SK-N-SH (cell line): ENCODE measurements at regions of chr2 and their contacts with region 1.

Region 1: GRCh38 chr2:46364797-46365457 is 67.7 kb downstream of the EPAS1 start:
- DNase-seq: peak; percentile 80
- H3K4me3 ChIP-seq: no peak overlapping the region; a peak in 1 of 4 replicates
- H3K27ac ChIP-seq: peak overlapping the region; percentile 75 to 98; a peak in 3 of 4 replicates
- H3K4me1 ChIP-seq: peaks cover 14 to 76% of the 10 kb centered on the region in 2 experiments; a peak in 3 of 4 replicates
- H3K27me3 ChIP-seq: no peaks in the 10 kb centered on the region
- CTCF ChIP-seq: peak; percentile 98
- EP300 ChIP-seq: peak in 1 of 2 experiments; percentile 74; a peak in 2 of 4 replicates
- RAD21 ChIP-seq: peak; percentile 94

Region 2: DNA sequence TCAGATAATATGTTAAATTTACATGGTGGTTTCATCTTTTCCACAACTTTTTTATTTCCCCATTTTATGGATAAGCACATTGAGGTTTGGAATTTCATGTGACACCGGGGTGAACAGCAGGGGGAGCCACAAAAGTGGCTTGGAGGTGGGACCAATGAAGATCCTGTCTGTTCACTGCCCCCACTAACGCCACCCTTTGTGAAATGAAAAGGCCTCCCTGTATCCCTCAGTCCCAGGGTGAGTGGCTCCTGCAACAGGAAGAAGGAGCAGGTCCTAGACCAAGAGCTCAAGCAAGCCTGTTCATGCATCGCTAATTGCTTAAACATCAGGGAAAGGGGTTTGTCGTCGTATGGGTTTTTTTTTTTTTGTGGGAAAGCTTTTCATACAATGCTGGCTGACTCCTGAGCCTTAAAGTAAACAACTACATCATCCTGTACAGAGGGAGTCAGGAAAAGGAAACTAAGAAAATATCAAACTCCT is 335.6 kb before region 1 on chr2:
- CTCF ChIA-PET with region 1: interaction called, 13 read pairs
- POLR2A ChIA-PET with region 1: no interaction called
- DNase-seq: no peak
- H3K4me3 ChIP-seq: no peak overlapping the region
- H3K27ac ChIP-seq: no peak overlapping the region
- H3K4me1 ChIP-seq: peaks cover 5 to 9% of the 10 kb centered on the region in 2 experiments; a peak in 1 of 4 replicates
- H3K27me3 ChIP-seq: no peaks in the 10 kb centered on the region
- CTCF ChIP-seq: peak; percentile 41
- EP300 ChIP-seq: no peak
- RAD21 ChIP-seq: no peak

Region 3: GRCh38 chr2:46236005-46236875 is 128.7 kb before region 1 on chr2:
- CTCF ChIA-PET with region 1: interaction called, 10 read pairs
- POLR2A ChIA-PET with region 1: no interaction called
- DNase-seq: peak; percentile 71
- H3K4me3 ChIP-seq: no peak overlapping the region
- H3K27ac ChIP-seq: peak overlapping the region in 1 of 2 experiments; percentile 93; a peak in 2 of 4 replicates
- H3K4me1 ChIP-seq: peaks cover 0 to 38% of the 10 kb centered on the region in 2 experiments; a peak in 2 of 4 replicates
- H3K27me3 ChIP-seq: no peaks in the 10 kb centered on the region
- CTCF ChIP-seq: no peak
- EP300 ChIP-seq: peak in 1 of 2 experiments; percentile 83; a peak in 1 of 4 replicates
- RAD21 ChIP-seq: peak; percentile 36

Region 4: DNA sequence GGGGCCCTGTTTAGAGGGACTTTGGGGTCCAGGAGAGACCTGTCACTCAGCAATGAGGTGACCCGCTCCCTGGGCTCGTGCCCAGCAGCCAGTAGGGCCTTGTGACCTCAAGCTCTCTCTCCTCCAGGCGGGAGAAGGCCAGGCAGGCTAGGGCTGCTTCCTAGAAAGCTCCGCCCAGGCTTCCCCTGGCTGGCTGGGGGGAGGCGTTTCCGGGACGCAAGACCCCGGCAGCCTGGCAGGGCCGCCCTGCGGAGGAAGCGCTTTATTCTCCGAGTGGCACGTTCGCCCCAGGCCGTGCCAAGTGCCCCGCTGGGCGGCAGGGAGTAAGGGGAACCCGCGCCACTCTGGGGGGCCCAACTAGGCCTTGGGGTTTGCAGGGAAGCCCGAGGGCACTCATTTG is 89.0 kb before region 1 on chr2:
- CTCF ChIA-PET with region 1: no interaction called
- POLR2A ChIA-PET with region 1: no interaction called
- DNase-seq: no peak
- H3K4me3 ChIP-seq: no peak overlapping the region
- H3K27ac ChIP-seq: no peak overlapping the region
- H3K4me1 ChIP-seq: no peaks in the 10 kb centered on the region; a peak in 1 of 4 replicates
- H3K27me3 ChIP-seq: no peaks in the 10 kb centered on the region
- CTCF ChIP-seq: no peak
- EP300 ChIP-seq: no peak
- RAD21 ChIP-seq: no peak

Region 5: DNA sequence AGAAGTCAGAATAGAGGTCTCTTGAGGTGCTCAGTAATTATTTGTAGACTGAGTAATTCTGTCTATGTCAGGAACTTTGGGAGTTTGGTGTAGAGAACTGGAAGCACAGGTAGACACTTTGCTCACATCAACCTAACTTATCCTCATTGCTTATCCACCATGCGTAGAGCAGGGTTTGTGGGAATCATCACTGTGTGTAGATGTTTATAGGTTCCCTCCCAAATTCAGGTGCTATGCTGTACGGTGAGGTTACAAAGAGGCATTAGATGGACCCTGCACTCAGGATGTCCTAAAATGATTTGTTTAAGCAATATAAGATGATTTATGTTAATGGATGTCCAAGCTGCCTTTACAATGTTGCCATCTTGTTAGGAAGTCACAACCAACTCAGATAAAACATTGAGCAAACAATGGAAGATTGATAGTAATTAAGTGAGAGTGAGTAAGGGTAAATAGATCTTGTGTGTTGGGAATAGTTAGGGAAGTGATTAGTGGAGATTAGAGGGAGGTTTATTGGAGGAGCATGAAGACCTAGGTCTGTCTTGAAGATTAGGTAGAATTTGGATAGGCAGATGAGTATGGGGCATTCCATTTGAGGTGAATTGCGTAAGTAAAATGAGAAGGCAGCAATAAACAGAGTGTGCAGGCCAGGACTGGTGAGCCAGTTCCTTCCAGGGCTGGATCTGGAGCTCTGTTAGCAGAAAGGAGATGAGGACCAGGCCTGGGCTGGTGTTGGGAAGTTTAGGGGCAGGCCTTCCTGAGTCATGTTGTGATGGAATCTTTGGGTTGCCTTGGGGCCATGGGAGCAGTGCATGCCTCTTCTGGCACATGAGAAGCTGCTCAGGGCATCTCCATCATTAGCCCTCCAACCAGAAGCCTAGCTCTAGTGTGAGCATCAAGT is 55.6 kb before region 1 on chr2:
- CTCF ChIA-PET with region 1: interaction called, 24 read pairs
- POLR2A ChIA-PET with region 1: no interaction called
- DNase-seq: no peak
- H3K4me3 ChIP-seq: no peak overlapping the region
- H3K27ac ChIP-seq: peak overlapping the region in 1 of 2 experiments; percentile 41; a peak in 1 of 4 replicates
- H3K4me1 ChIP-seq: peaks cover 20 to 75% of the 10 kb centered on the region in 2 experiments; a peak in 3 of 4 replicates
- H3K27me3 ChIP-seq: no peaks in the 10 kb centered on the region
- CTCF ChIP-seq: no peak
- EP300 ChIP-seq: no peak
- RAD21 ChIP-seq: no peak

Region 6: DNA sequence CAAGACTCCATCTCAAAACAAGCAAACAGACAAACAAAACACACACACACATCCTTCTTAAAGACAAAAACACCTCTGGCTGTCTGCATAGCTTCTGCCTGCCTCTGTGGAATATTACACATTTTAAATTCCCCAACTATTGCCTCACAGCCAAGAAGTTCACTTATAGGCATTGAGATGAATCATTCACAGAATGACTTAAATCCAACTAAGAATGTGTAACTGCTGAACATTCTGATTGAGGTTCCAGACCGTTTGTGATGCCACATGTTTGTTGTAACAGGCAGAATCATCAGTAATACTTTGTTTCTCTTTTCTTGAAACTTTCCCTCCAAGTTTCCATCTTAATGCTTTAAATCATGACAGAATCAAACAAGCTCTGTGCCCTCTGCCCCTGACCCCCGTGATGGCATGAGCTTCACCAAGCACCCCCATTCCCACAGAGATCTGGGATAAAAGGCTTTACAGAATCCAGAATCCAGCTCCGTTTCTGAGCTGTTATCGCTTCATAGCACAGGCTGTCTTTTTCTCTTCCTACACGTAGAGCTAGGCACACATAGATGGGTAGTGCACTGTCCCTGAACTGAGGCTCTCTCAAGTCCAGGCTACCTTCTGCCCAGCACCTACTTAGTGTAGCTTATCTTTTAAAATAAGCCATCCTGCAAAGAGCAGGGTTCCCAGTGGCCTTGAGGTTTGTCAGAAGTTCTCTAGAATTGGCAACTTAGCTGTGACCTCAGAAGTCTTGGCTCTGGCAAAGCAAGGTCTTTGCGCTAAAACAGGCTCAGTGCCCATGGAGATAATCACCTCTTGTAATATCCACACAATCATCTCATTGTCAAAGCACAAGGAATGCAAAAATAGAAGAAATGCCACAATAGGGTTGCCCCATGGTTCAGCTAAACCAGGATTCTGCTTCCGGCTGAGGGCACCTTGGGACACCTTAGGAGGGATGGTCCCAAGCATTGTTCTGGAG is 34.8 kb before region 1 on chr2:
- CTCF ChIA-PET with region 1: interaction called, 194 read pairs
- POLR2A ChIA-PET with region 1: interaction called, 8 read pairs
- DNase-seq: no peak
- H3K4me3 ChIP-seq: no peak overlapping the region
- H3K27ac ChIP-seq: peak overlapping the region; percentile 100
- H3K4me1 ChIP-seq: peaks cover 61 to 94% of the 10 kb centered on the region in 2 experiments
- H3K27me3 ChIP-seq: no peaks in the 10 kb centered on the region
- CTCF ChIP-seq: no peak
- EP300 ChIP-seq: peak in 1 of 2 experiments; percentile 79; a peak in 2 of 4 replicates
- RAD21 ChIP-seq: no peak

Region 7: DNA sequence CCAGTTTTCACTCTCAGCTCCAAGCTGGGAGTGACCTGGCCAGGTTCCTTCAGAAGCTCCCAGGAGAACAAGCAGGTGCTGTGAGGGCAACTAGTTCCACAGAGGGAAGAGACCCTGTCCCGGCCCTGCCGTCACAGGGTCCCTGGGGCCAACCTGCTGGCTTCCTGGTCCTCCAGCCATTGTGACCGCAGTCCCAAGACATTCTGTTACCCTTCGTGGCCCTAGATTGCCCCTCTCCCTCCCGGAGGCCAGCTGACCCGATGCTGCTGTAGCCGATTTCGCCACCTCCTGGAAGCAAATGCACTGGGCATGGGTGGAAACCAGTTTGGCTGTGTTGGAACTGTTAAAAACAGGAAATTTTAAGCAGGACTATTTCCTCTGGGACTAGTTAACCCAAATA is 12.3 kb before region 1 on chr2:
- CTCF ChIA-PET with region 1: interaction called, 194 read pairs
- POLR2A ChIA-PET with region 1: interaction called, 4 read pairs
- DNase-seq: no peak
- H3K4me3 ChIP-seq: no peak overlapping the region
- H3K27ac ChIP-seq: peak overlapping the region in 1 of 2 experiments; percentile 47; a peak in 1 of 4 replicates
- H3K4me1 ChIP-seq: peaks cover 0 to 61% of the 10 kb centered on the region in 2 experiments; a peak in 2 of 4 replicates
- H3K27me3 ChIP-seq: no peaks in the 10 kb centered on the region
- CTCF ChIP-seq: no peak; the same call in 1 of the 2 replicates
- EP300 ChIP-seq: no peak
- RAD21 ChIP-seq: no peak

Region 8: DNA sequence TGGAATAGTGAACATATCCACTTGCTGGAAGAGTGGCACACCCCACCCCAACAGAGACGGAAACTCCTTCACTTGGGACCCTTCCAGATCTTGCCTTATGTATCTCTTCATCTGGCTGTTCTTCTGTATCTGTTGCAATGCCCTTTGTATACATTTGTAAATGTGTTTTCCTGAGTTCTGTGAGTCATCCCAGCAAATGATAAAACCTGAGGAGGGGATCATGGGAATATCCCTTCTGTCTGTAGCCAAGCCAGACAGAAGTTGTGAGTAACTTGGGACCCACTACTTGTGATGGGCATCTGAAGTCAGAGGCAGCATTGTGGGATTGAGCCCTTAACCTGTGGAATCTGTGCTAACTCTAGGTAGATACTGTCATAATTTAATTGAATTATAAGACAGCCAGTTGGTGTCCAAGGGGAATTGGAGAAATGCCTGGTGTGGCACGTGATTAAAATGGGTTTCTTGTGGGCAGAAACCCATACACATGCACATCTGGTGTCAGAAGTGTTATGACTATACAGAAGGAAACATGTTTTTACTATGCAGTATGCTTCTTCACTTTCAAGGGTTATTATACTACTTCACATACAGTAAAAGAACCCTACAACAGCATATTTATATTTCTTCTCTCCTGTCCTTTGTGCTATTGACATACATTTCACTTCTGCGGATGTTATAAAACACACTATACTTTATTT is 82.1 kb after region 1 on chr2:
- CTCF ChIA-PET with region 1: no interaction called
- POLR2A ChIA-PET with region 1: no interaction called
- DNase-seq: no peak
- H3K4me3 ChIP-seq: no peak overlapping the region
- H3K27ac ChIP-seq: no peak overlapping the region
- H3K4me1 ChIP-seq: no peaks in the 10 kb centered on the region
- H3K27me3 ChIP-seq: no peaks in the 10 kb centered on the region
- CTCF ChIP-seq: no peak
- EP300 ChIP-seq: no peak
- RAD21 ChIP-seq: no peak

Region 9: DNA sequence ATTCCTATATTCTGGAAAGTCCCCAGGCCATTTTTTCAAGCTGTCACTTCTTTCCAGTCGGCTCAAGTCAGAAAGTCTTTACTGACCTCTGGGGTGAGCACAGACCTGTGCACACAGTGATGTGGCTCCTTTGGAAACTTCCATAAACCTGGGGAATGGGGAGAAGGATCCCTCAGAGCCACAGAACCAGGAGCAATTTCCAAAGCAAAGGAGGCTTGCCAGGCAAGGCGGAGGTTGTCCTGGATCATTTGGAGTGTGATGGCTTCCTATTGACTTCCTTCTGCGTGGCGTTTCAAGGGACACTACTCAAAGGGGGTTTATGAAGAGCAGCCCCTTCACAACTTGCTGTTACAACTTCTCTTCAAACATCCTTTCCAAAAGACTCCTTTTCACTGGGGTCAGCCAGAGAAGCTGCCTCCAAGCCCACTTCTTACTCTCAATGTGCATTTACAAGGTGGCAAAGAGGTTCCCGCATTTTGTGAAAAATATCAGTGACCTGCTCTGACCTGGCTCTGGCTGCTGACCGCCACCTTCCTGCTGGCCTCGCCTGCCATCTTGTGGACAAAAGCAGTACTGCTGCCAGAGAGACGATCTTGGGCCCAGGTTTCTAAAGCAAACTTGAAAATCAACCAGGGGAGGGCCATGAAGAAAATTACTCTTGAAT is 96.2 kb after region 1 on chr2:
- CTCF ChIA-PET with region 1: interaction called, 30 read pairs
- POLR2A ChIA-PET with region 1: no interaction called
- DNase-seq: peak; percentile 79
- H3K4me3 ChIP-seq: no peak overlapping the region; a peak in 1 of 4 replicates
- H3K27ac ChIP-seq: peak overlapping the region in 1 of 2 experiments; percentile 72; a peak in 1 of 4 replicates
- H3K4me1 ChIP-seq: peaks cover 0 to 21% of the 10 kb centered on the region in 2 experiments; a peak in 1 of 4 replicates
- H3K27me3 ChIP-seq: no peaks in the 10 kb centered on the region
- CTCF ChIP-seq: peak; percentile 100
- EP300 ChIP-seq: no peak
- RAD21 ChIP-seq: peak; percentile 100

Region 10: DNA sequence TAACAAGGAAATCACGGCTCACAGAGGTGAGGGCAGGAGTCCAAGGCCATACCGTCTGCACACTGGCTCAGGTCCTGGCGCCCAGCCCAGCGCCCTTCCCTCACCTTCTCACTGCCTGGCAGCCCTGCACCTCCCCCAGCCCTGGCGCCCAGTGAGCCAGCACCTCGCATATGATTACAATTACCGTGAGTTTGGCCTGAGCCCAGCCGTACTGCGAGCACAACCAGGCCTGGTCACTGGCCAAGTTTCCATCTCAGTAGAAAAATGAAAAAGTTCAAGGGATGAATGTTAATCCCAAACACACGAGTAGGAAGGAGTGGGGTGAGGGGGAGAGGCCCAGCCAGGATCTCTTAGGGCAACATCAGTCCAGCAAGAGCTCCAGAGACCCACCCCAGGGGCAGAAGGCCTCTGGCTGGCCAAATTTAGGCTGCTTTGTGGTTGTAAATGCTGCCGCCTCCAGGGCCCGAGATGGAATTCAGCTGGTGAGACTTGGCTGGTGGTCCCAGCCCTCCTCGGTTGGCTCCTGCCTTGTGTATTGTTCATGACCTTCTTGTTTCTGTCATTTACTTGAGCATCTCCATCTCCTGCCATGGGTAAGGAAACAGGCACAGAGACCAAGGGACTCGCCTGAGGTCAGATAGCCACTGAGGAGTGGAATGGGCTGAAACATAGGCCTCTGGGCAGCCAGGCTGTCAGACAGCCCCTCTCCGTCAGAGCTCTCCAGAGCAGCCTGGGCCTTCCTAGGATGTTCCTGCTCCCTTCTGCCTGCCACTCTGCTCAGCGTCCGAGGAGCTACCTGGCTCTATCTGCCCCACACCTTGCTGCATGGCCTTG is 482.5 kb after region 1 on chr2:
- CTCF ChIA-PET with region 1: no interaction called
- POLR2A ChIA-PET with region 1: no interaction called
- DNase-seq: peak; percentile 91
- H3K4me3 ChIP-seq: 0 out of 4 replicates have a peak overlapping the region, but pooled peaks of 1 of the 2 experiments have one; percentile 5
- H3K27ac ChIP-seq: peak overlapping the region; percentile 92 to 99
- H3K4me1 ChIP-seq: peaks cover 57 to 63% of the 10 kb centered on the region in 2 experiments
- H3K27me3 ChIP-seq: no peaks in the 10 kb centered on the region
- CTCF ChIP-seq: peak; percentile 27
- EP300 ChIP-seq: peak; percentile 92 to 100
- RAD21 ChIP-seq: no peak; the same call in 1 of the 2 replicates